Heart left ventricle (tissue), 16 donors: ENCODE measurements at regions of chr16 and their contacts with region 1.

Region 1: DNA sequence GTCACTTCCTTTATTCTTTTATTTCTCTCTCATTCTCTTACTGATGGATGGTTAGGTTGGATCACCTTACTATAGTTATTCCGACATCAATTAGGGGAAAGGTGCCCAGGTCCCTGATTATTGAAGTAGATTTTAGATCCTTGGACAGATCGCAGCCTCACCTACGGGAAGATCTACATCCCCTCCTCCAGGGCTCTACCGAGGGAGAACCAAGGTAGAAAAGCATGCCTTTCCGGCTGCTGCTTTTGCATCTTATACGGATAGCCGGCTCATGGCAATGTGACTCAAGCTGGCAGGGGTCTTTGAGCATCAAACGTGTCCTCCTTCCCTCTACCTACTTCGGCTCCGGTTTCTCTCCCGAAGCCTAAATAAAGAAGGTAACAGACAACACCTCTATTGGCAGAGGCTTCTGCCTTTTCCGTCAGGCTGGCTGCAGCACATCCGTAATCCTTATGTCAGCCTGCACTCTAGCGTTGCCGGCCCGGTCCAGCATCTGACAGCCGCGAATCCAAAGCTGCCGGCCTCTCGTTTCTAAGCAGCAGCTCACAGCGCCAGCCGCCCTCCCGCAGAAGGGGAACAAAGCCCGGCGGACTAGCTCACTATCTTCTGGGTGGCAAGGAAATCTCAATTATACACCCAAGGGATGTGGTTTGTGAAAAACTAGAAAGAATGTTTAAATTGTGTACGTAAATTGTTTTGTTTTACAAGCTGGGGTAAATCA is 46.9 kb downstream of the IRX6 start:
- DNase-seq: peak; percentile 76 to 86 (median 83)
- ATAC-seq: peak; percentile 65 to 86 (median 82)
- H3K4me3 ChIP-seq: peak overlapping the region in 6 of 12 donors; percentile 8 to 26 (median 16)
- H3K27ac ChIP-seq: peak overlapping the region in 8 of 12 donors; percentile 55 to 93 (median 88)
- H3K4me1 ChIP-seq: peaks cover 0 to 60% (median 30%) of the 10 kb centered on the region in 12 donors
- H3K27me3 ChIP-seq: peaks cover 0 to 35% (median 0%) of the 10 kb centered on the region in 9 donors
- CTCF ChIP-seq: peak; percentile 26 to 78 (median 59)
- POLR2A ChIP-seq: peak in 1 of 2 donors; percentile 26

Region 2: GRCh38 chr16:53773150-53773846 is 1597.6 kb before region 1 on chr16:
- intact Hi-C with region 1: loop called in 2 of 10 experiments (anchors 10 kb)
- DNase-seq: peak in 4 of 5 donors; percentile 21 to 35 (median 26)
- ATAC-seq: peak; percentile 84 to 94 (median 89)
- H3K4me3 ChIP-seq: no peak overlapping the region
- H3K27ac ChIP-seq: peak overlapping the region in 10 of 12 donors; percentile 17 to 66 (median 46)
- H3K4me1 ChIP-seq: peaks cover 0 to 85% (median 37%) of the 10 kb centered on the region in 12 donors
- H3K27me3 ChIP-seq: no peaks in the 10 kb centered on the region
- CTCF ChIP-seq: peak; percentile 38 to 70 (median 60)
- POLR2A ChIP-seq: no peak

Region 3: GRCh38 chr16:53945996-53946395 is 1424.9 kb before region 1 on chr16:
- intact Hi-C with region 1: loop called in 1 of 10 experiments (anchors 5 kb)
- DNase-seq: no peak
- ATAC-seq: peak in 3 of 4 donors; percentile 60 to 76 (median 71)
- H3K4me3 ChIP-seq: no peak overlapping the region
- H3K27ac ChIP-seq: no peak overlapping the region
- H3K4me1 ChIP-seq: peaks cover 0 to 8% (median 0%) of the 10 kb centered on the region in 12 donors
- H3K27me3 ChIP-seq: no peaks in the 10 kb centered on the region
- CTCF ChIP-seq: peak; percentile 51 to 78 (median 72)
- POLR2A ChIP-seq: no peak

Region 4: DNA sequence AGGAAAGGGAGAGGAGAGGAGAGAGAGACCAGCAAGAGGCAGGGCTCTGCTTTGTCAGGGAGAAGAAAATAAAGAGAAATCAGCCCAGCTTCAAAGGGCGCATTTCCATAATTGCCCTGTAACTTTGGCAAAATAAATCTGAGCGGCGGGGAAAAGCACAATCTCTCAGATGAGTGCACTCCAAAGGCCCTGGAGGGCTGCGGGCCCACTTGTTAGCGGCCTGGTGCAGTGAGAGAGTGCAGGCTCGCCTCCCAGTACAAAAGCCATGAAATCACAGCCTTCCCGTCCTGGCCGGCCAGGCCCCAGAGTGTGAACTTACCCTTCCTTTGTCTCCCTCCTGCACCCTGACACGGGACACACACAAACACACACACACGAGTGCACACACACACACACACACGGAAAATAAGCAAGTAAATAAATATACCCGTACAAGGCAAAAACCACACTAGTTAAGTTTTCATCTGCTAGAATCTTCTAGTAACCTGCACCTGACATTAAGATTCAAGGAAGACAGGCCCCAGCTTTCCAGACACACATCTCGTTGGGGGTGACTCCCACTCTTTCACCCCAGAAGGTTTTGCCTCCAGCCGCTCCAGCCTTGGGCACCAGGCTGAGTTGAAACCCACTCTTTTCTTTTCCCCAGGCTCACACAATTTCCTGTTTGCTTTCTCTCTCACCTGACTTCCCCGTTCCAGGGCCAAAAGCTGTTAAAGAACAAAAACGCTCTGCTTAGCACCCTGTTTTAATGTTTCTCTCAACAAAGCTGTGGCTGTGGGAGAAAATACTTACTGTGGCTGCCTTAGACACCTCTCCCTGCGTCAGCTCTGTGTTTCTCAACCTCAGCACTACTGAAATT is 1092.8 kb before region 1 on chr16:
- intact Hi-C with region 1: loop called in 2 of 10 experiments (anchors 10 kb)
- DNase-seq: no peak
- ATAC-seq: no peak
- H3K4me3 ChIP-seq: no peak overlapping the region
- H3K27ac ChIP-seq: no peak overlapping the region
- H3K4me1 ChIP-seq: peaks cover 0 to 10% (median 5%) of the 10 kb centered on the region in 12 donors
- H3K27me3 ChIP-seq: peaks cover 0 to 30% (median 0%) of the 10 kb centered on the region in 9 donors
- CTCF ChIP-seq: no peak
- POLR2A ChIP-seq: no peak

Region 5: GRCh38 chr16:54489225-54490111 is 881.5 kb before region 1 on chr16:
- intact Hi-C with region 1: loop called in 1 of 10 experiments (anchors 10 kb)
- DNase-seq: no peak
- ATAC-seq: peak; percentile 21 to 83 (median 52)
- H3K4me3 ChIP-seq: no peak overlapping the region
- H3K27ac ChIP-seq: peak overlapping the region in 9 of 12 donors; percentile 19 to 73 (median 50)
- H3K4me1 ChIP-seq: peaks cover 5 to 47% (median 19%) of the 10 kb centered on the region in 12 donors
- H3K27me3 ChIP-seq: no peaks in the 10 kb centered on the region
- CTCF ChIP-seq: no peak
- POLR2A ChIP-seq: no peak

Region 6: DNA sequence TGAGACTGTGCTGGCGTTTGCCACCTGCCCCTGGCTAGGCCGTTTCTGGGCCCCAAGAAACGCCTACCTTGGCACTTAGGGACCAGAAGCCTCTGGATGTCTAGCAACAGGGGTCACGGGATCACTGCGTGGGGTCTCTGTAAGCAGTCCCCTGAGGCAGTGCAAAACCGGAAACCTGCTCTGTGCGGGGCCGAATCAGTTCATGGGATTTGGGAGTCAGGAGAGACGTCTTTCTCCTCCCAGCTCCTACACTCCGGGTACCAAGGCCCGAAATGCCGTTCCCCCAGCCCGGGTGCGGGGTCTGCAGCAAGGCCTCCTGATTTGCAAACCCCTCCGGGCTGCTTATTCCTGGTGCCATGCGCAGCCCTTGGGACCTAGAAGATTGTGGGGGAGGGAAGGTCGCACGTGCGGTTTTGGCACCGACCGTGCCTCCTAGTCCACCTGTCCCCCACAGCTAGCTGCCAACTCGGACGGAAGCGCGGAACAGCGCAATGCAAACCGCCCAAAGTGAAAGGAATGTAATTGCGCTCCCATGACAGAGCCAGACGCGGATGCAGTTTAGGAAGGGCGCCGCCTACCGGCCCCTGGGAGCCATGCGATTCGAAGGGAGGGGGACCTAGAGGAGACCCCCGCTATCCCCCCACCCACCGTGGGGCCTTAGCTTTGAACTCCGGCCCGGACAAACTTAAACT is 433.8 kb before region 1 on chr16:
- intact Hi-C with region 1: loop called in 7 of 10 experiments (anchors 2 to 10 kb)
- DNase-seq: peak in 4 of 5 donors; percentile 48 to 69 (median 62)
- ATAC-seq: peak; percentile 25 to 74 (median 52)
- H3K4me3 ChIP-seq: peak overlapping the region; percentile 15 to 86 (median 72)
- H3K27ac ChIP-seq: peak overlapping the region; percentile 26 to 96 (median 69)
- H3K4me1 ChIP-seq: peaks cover 0 to 45% (median 22%) of the 10 kb centered on the region in 12 donors
- H3K27me3 ChIP-seq: peaks cover 12 to 98% (median 67%) of the 10 kb centered on the region in 9 donors
- CTCF ChIP-seq: peak; percentile 50 to 84 (median 66)
- POLR2A ChIP-seq: no peak

Region 7: GRCh38 chr16:55323637-55324490 is 47.1 kb before region 1 on chr16 and contains the start of gene IRX6:
- intact Hi-C with region 1: loop called in 4 of 10 experiments (anchors 2 to 5 kb)
- DNase-seq: peak in 4 of 5 donors; percentile 65 to 91 (median 76)
- ATAC-seq: peak; percentile 71 to 85 (median 83)
- H3K4me3 ChIP-seq: peak within 1 kb of the TSS; percentile 30 to 70 (median 58)
- H3K27ac ChIP-seq: peak within 1 kb of the TSS; percentile 50 to 98 (median 92)
- H3K4me1 ChIP-seq: peaks cover 0 to 19% (median 1%) of the 10 kb centered on the region in 12 donors
- H3K27me3 ChIP-seq: peaks cover 0 to 66% (median 32%) of the 10 kb centered on the region in 9 donors
- CTCF ChIP-seq: peak; percentile 21 to 76 (median 62)
- POLR2A ChIP-seq: no peak
- total RNA-seq, gene IRX6: 0.96 to 48.4 (median 12.4) TPM